HepG2 (cell line): ENCODE measurements at regions of chr17 and their contacts with region 1.

Region 1: DNA sequence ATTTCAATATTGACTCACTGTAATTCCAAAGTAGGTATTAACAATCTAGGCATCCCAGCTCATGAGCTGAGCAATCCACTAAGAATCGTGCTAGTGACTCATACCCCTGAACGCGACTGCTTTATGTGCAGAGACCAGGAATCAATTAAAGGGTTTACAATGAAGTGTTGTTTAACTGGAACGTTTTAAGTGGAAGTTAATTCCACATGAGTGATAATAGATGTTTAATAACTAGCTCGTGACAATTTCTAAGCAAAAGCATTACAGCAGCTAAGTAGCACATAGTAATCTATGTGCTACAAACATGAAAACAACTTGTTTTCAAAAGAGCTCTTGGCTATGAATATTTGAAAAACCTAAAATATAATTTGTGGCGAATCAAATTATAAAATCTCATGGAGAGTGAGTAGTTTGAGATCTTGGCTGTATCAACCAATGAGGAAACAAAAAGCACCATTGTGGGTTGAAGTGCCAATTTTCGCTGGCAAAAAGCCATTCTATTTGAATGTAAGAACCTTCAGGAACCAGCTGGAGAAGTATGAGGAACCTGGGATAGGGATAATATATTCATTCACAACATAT is 9.4 kb downstream of the GJC1 start:
- DNase-seq: peak; percentile 36
- ATAC-seq: no peak
- H3K4me3 ChIP-seq: no peak overlapping the region
- H3K27ac ChIP-seq: no peak overlapping the region
- H3K4me1 ChIP-seq: no peaks in the 10 kb centered on the region
- H3K27me3 ChIP-seq: no peaks in the 10 kb centered on the region
- CTCF ChIP-seq: no peak
- EP300 ChIP-seq: no peak
- POLR2A ChIP-seq: no peak
- RAD21 ChIP-seq: no peak

Region 2: DNA sequence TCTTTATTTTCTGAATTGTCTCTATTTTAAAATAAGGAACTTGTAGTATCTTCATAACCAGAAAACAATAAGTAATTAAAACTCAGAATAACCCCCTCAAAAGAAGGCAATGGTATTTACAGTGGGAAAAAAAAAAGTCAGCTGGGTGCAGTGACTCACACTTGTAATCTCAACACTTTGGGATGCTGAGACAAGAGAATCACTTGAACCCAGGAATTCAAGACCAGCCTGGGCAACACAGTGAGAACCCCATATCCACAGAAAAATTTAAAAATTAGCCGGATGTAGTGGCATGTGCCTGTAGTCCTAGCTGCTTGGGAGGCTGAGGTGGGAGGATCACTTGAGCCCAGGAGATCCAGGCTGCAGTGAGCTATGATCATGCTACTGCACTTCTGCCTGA is 28.4 kb before region 1 on chr17:
- CTCF ChIA-PET with region 1: no interaction called
- POLR2A ChIA-PET with region 1: no interaction called
- in situ Hi-C with region 1: no loop called
- intact Hi-C with region 1: no loop called
- DNase-seq: no peak
- ATAC-seq: no peak
- H3K4me3 ChIP-seq: no peak overlapping the region
- H3K27ac ChIP-seq: no peak overlapping the region
- H3K4me1 ChIP-seq: peaks cover 12% of the 10 kb centered on the region
- H3K27me3 ChIP-seq: peaks cover 3 to 12% of the 10 kb centered on the region in 2 experiments; a peak in 3 of 5 replicates
- CTCF ChIP-seq: no peak
- EP300 ChIP-seq: no peak
- POLR2A ChIP-seq: no peak
- RAD21 ChIP-seq: no peak

Region 3: GRCh38 chr17:44899069-44899782 is 78.5 kb after region 1 on chr17 and contains the start of gene EFTUD2:
- CTCF ChIA-PET with region 1: no interaction called
- POLR2A ChIA-PET with region 1: no interaction called
- in situ Hi-C with region 1: no loop called
- intact Hi-C with region 1: loop called (anchors 2 kb)
- DNase-seq: peak; percentile 85
- ATAC-seq: peak; percentile 88
- H3K4me3 ChIP-seq: peak within 1 kb of the TSS; percentile 79 to 94 (median 87)
- H3K27ac ChIP-seq: peak within 1 kb of the TSS; percentile 89
- H3K4me1 ChIP-seq: peaks cover 26% of the 10 kb centered on the region
- H3K27me3 ChIP-seq: no peaks in the 10 kb centered on the region; a peak in 1 of 5 replicates
- CTCF ChIP-seq: no peak
- EP300 ChIP-seq: peak; percentile 34 to 56; a peak in 1 of 4 replicates
- POLR2A ChIP-seq: peak; percentile 90 to 95
- RAD21 ChIP-seq: peak; percentile 51; the same call in 1 of the 2 replicates
- total RNA-seq, gene EFTUD2: 137 and 310 TPM in 2 replicates